CD8-positive, alpha-beta T cell (primary cell): ENCODE measurements at regions of chr10 and their contacts with region 1.

Region 1: GRCh38 chr10:84139126-84140035 is at the start of gene GHITM:
- DNase-seq: peak; percentile 98 to 100 (median 99)
- ATAC-seq: peak; percentile 95
- H3K4me3 ChIP-seq: peak within 1 kb of the TSS; percentile 85 to 97
- H3K4me3 Mint-ChIP-seq: peak within 1 kb of the TSS; percentile 97
- H3K27ac ChIP-seq: peak within 1 kb of the TSS; percentile 99
- H3K27ac Mint-ChIP-seq: peak within 1 kb of the TSS; percentile 99
- H3K4me1 ChIP-seq: peaks cover 20% of the 10 kb centered on the region
- H3K4me1 Mint-ChIP-seq: peaks cover 35% of the 10 kb centered on the region
- H3K27me3 ChIP-seq: no peaks in the 10 kb centered on the region
- H3K27me3 Mint-ChIP-seq: no peaks in the 10 kb centered on the region
- CTCF ChIP-seq: peak; percentile 33
- total RNA-seq, gene GHITM: 72.3 to 76.3 TPM

Region 2: DNA sequence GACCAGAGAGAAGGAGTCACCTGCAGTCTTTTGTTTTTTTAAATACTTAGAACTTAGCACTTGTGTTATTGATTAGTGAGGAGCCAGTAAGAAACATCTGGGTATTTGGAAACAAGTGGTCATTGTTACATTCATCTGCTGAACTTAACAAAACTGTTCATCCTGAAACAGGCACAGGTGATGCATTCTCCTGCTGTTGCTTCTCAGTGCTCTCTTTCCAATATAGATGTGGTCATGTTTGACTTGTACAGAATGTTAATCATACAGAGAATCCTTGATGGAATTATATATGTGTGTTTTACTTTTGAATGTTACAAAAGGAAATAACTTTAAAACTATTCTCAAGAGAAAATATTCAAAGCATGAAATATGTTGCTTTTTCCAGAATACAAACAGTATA is 13.4 kb after region 1 on chr10:
- CTCF ChIA-PET with region 1: interaction called, 18 read pairs
- POLR2A ChIA-PET with region 1: interaction called, 6 read pairs
- intact Hi-C with region 1: loop called in 1 of 2 experiments (anchors 1 kb)
- DNase-seq: no peak
- ATAC-seq: no peak
- H3K4me3 ChIP-seq: no peak overlapping the region
- H3K4me3 Mint-ChIP-seq: no peak overlapping the region
- H3K27ac ChIP-seq: no peak overlapping the region
- H3K27ac Mint-ChIP-seq: no peak overlapping the region
- H3K4me1 ChIP-seq: peaks cover 6% of the 10 kb centered on the region
- H3K4me1 Mint-ChIP-seq: peaks cover 17% of the 10 kb centered on the region
- H3K27me3 ChIP-seq: no peaks in the 10 kb centered on the region
- H3K27me3 Mint-ChIP-seq: no peaks in the 10 kb centered on the region
- CTCF ChIP-seq: no peak

Region 3: GRCh38 chr10:84177541-84178141 is 38.3 kb after region 1 on chr10:
- CTCF ChIA-PET with region 1: interaction called, 11 read pairs
- POLR2A ChIA-PET with region 1: interaction called, 17 read pairs
- intact Hi-C with region 1: loop called in 1 of 2 experiments (anchors 2 kb)
- DNase-seq: peak; percentile 24 to 88 (median 55)
- ATAC-seq: peak; percentile 91
- H3K4me3 ChIP-seq: peak overlapping the region; percentile 10 to 17
- H3K4me3 Mint-ChIP-seq: no peak overlapping the region
- H3K27ac ChIP-seq: peak overlapping the region; percentile 13 to 69
- H3K27ac Mint-ChIP-seq: no peak overlapping the region
- H3K4me1 ChIP-seq: peaks cover 31% of the 10 kb centered on the region
- H3K4me1 Mint-ChIP-seq: peaks cover 12% of the 10 kb centered on the region
- H3K27me3 ChIP-seq: peaks cover 0 to 2% of the 10 kb centered on the region in 2 experiments
- H3K27me3 Mint-ChIP-seq: no peaks in the 10 kb centered on the region
- CTCF ChIP-seq: no peak

Region 4: DNA sequence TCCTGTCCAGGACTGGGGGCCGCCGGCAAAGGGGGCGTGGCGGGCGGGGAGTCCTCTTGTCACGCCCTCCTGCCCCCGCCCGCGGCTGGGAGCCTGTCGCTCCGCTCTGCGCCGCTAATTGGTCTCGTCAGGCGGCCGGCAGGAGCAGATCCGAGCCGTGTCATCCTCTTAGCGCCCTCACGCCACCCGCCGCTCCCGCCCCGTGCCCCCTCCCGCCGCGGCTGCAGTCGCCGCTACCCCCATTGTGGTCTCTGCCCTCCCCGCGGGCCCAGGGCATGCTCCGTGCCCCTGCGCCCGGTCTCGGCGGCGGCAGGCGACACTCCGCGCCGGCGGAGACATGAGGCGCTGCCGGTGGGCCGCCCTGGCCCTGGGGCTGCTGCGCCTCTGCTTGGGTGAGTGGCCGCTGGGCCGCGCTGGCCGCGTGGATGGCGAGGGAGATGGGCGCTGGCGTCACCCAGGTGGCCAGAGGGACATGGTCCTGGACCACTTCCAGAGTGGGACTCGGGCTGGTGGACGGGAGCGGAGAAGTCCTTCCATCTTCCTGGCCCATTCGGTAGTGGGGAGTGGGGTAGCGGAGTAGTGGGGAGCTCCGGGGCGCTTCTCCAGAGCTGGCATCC is 55.2 kb after region 1 on chr10 and contains the start of gene CDHR1:
- CTCF ChIA-PET with region 1: interaction called, 372 read pairs
- POLR2A ChIA-PET with region 1: interaction called, 4 read pairs
- intact Hi-C with region 1: loop called in 1 of 2 experiments (anchors 2 kb)
- DNase-seq: peak; percentile 12 to 79 (median 52)
- ATAC-seq: peak; percentile 70
- H3K4me3 ChIP-seq: peak within 1 kb of the TSS; percentile 49 to 56
- H3K4me3 Mint-ChIP-seq: peak within 1 kb of the TSS; percentile 77
- H3K27ac ChIP-seq: no peak within 1 kb of the TSS
- H3K27ac Mint-ChIP-seq: no peak within 1 kb of the TSS
- H3K4me1 ChIP-seq: peaks cover 26% of the 10 kb centered on the region
- H3K4me1 Mint-ChIP-seq: peaks cover 27% of the 10 kb centered on the region
- H3K27me3 ChIP-seq: peaks cover 0 to 6% of the 10 kb centered on the region in 2 experiments
- H3K27me3 Mint-ChIP-seq: peaks cover 9% of the 10 kb centered on the region
- CTCF ChIP-seq: no peak
- total RNA-seq, gene CDHR1: 1.5 to 1.7 TPM

Region 5: DNA sequence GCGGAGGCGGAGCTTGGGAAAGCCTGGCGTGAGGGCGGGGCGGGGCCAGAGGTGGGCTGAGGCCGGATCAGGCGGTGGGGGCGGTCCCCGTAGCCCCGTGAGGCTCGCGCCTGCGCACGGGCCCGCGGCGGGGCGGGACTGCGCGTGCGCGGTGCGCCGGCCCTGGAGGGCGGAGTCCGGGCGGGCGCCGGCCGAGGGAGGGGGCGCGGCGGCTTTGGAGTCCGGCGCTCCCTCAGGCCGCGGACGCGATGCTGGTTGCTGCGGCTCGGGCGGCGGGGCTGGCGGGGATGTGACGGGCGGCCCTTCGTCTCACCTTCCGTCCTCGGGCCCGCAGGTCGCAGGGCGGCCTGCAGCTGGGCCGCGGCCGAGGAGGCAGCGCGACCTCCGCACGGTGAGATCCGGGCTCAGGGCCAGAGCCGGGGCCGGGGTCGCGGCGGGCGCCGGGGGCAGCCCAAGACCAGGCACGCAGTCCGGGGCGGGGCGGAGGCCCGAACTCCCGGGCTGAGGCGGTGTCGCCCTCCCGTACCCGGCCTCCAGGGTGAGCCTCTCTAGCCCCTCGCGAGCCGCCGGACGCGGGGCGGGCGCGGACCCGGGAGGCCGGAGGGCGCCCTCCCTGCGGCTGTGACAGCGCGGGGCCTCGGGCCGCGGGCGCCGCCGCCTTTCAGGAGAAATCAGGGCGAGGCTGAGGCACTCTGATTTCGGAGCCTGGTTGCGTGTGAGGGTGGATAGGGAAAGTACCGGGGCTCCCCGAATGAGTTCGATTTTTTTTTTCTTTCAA is 189.2 kb after region 1 on chr10 and contains the start of gene CCSER2:
- CTCF ChIA-PET with region 1: no interaction called
- POLR2A ChIA-PET with region 1: interaction called, 4 read pairs
- intact Hi-C with region 1: loop called (anchors 1 to 2 kb)
- DNase-seq: peak; percentile 81 to 95 (median 90)
- ATAC-seq: peak; percentile 54
- H3K4me3 ChIP-seq: peak within 1 kb of the TSS; percentile 52 to 65
- H3K4me3 Mint-ChIP-seq: peak within 1 kb of the TSS; percentile 93
- H3K27ac ChIP-seq: peak within 1 kb of the TSS; percentile 87 to 88
- H3K27ac Mint-ChIP-seq: peak within 1 kb of the TSS; percentile 99
- H3K4me1 ChIP-seq: peaks cover 33% of the 10 kb centered on the region
- H3K4me1 Mint-ChIP-seq: peaks cover 40% of the 10 kb centered on the region
- H3K27me3 ChIP-seq: no peaks in the 10 kb centered on the region
- H3K27me3 Mint-ChIP-seq: no peaks in the 10 kb centered on the region
- CTCF ChIP-seq: no peak
- total RNA-seq, gene CCSER2: 141 to 143 TPM